Activated CD4-positive, alpha-beta memory T cell treated with anti-CD3 and anti-CD28 coated beads for 36 hours (primary cell): ENCODE measurements at regions of chr1 and their contacts with region 1.

Region 1: GRCh38 chr1:42736150-42736850 is 3.7 kb downstream of the CLDN19 start:
- DNase-seq: peak; percentile 17
- H3K4me3 Mint-ChIP-seq: no peak overlapping the region
- H3K27ac Mint-ChIP-seq: no peak overlapping the region
- H3K4me1 Mint-ChIP-seq: peaks cover 5% of the 10 kb centered on the region
- H3K27me3 Mint-ChIP-seq: no peaks in the 10 kb centered on the region

Region 2: GRCh38 chr1:42146626-42147320 is 589.5 kb before region 1 on chr1:
- CTCF ChIA-PET with region 1: no interaction called
- POLR2A ChIA-PET with region 1: no interaction called
- intact Hi-C with region 1: loop called (anchors 10 kb)
- DNase-seq: peak; percentile 80
- H3K4me3 Mint-ChIP-seq: no peak overlapping the region
- H3K27ac Mint-ChIP-seq: no peak overlapping the region
- H3K4me1 Mint-ChIP-seq: peaks cover 5% of the 10 kb centered on the region
- H3K27me3 Mint-ChIP-seq: peaks cover 2% of the 10 kb centered on the region